SK-N-SH (cell line): ENCODE measurements at regions of chr12 and their contacts with region 1.

Region 1: GRCh38 chr12:3034067-3034750 is 43.0 kb upstream of the TSPAN9 start:
- DNase-seq: peak; percentile 92
- H3K4me3 ChIP-seq: no peak overlapping the region; a peak in 1 of 4 replicates
- H3K27ac ChIP-seq: no peak overlapping the region
- H3K4me1 ChIP-seq: peaks cover 0 to 5% of the 10 kb centered on the region in 2 experiments; a peak in 1 of 4 replicates
- H3K27me3 ChIP-seq: no peaks in the 10 kb centered on the region
- CTCF ChIP-seq: peak; percentile 74
- EP300 ChIP-seq: no peak
- RAD21 ChIP-seq: peak; percentile 80

Region 2: GRCh38 chr12:2845280-2845679 is 188.9 kb before region 1 on chr12:
- CTCF ChIA-PET with region 1: interaction called, 11 read pairs
- POLR2A ChIA-PET with region 1: no interaction called
- DNase-seq: no peak
- H3K4me3 ChIP-seq: no peak overlapping the region
- H3K27ac ChIP-seq: no peak overlapping the region
- H3K4me1 ChIP-seq: peaks cover 0 to 6% of the 10 kb centered on the region in 2 experiments; a peak in 1 of 4 replicates
- H3K27me3 ChIP-seq: no peaks in the 10 kb centered on the region
- CTCF ChIP-seq: no peak
- EP300 ChIP-seq: no peak
- RAD21 ChIP-seq: no peak

Region 3: GRCh38 chr12:2877047-2877952 is 156.9 kb before region 1 on chr12 and contains the starts of genes FOXM1 and RHNO1:
- CTCF ChIA-PET with region 1: interaction called, 27 read pairs
- POLR2A ChIA-PET with region 1: no interaction called
- DNase-seq: peak; percentile 96
- H3K4me3 ChIP-seq: peak within 1 kb of the TSS; percentile 61 to 69
- H3K27ac ChIP-seq: peak within 1 kb of the TSS; percentile 80 to 87
- H3K4me1 ChIP-seq: peaks cover 8 to 10% of the 10 kb centered on the region in 2 experiments; a peak in 2 of 4 replicates
- H3K27me3 ChIP-seq: no peaks in the 10 kb centered on the region
- CTCF ChIP-seq: 0 out of 2 replicates have a peak, but pooled peaks have one; percentile 6
- EP300 ChIP-seq: no peak
- RAD21 ChIP-seq: no peak
- polyA plus RNA-seq, gene FOXM1: 17.0 and 29.9 TPM in 2 replicates
- polyA plus RNA-seq, gene RHNO1: 28.9 and 39.5 TPM in 2 replicates

Region 4: GRCh38 chr12:2944401-2945047 is 89.7 kb before region 1 on chr12:
- CTCF ChIA-PET with region 1: interaction called, 16 read pairs
- POLR2A ChIA-PET with region 1: interaction called, 5 read pairs
- DNase-seq: peak; percentile 74
- H3K4me3 ChIP-seq: no peak overlapping the region; a peak in 1 of 4 replicates
- H3K27ac ChIP-seq: no peak overlapping the region
- H3K4me1 ChIP-seq: no peaks in the 10 kb centered on the region
- H3K27me3 ChIP-seq: no peaks in the 10 kb centered on the region
- CTCF ChIP-seq: peak; percentile 72
- EP300 ChIP-seq: no peak
- RAD21 ChIP-seq: peak; percentile 81

Region 5: GRCh38 chr12:3012786-3013185 is 21.4 kb before region 1 on chr12:
- CTCF ChIA-PET with region 1: interaction called, 10 read pairs
- POLR2A ChIA-PET with region 1: no interaction called
- DNase-seq: no peak
- H3K4me3 ChIP-seq: no peak overlapping the region
- H3K27ac ChIP-seq: no peak overlapping the region
- H3K4me1 ChIP-seq: no peaks in the 10 kb centered on the region
- H3K27me3 ChIP-seq: no peaks in the 10 kb centered on the region
- CTCF ChIP-seq: no peak
- EP300 ChIP-seq: no peak
- RAD21 ChIP-seq: no peak